Right ventricle myocardium superior (tissue), 1 donor: ENCODE measurements at regions of chr16 and their contacts with region 1.

Region 1: GRCh38 chr16:82580298-82580890 is 46.4 kb upstream of the CDH13 start:
- DNase-seq: no peak
- ATAC-seq: peak; percentile 74

Region 2: GRCh38 chr16:82368041-82368440 is 212.4 kb before region 1 on chr16:
- intact Hi-C with region 1: loop called (anchors 5 kb)
- DNase-seq: peak; percentile 75
- ATAC-seq: peak; percentile 94

Region 3: DNA sequence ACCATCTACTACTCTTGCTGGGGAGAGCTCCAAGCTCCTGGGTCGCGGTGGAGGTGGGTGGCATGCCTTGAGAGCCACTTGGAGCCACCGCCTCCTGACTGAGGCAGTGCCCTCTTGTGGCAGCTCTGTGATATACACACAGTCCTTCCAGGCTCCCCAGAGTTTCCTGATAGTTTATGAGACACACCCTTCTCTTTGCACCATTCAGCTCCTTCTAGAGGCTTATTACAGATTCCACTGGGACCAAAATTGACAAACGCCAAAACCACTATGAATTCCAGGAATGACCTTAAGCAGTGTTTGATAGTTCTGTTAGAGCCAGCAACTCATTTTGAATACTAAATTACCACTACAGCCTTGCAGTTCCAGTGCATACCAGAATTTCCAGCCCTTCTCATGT is 123.7 kb before region 1 on chr16:
- intact Hi-C with region 1: loop called (anchors 10 kb)
- DNase-seq: peak; percentile 58
- ATAC-seq: peak; percentile 90

Region 4: DNA sequence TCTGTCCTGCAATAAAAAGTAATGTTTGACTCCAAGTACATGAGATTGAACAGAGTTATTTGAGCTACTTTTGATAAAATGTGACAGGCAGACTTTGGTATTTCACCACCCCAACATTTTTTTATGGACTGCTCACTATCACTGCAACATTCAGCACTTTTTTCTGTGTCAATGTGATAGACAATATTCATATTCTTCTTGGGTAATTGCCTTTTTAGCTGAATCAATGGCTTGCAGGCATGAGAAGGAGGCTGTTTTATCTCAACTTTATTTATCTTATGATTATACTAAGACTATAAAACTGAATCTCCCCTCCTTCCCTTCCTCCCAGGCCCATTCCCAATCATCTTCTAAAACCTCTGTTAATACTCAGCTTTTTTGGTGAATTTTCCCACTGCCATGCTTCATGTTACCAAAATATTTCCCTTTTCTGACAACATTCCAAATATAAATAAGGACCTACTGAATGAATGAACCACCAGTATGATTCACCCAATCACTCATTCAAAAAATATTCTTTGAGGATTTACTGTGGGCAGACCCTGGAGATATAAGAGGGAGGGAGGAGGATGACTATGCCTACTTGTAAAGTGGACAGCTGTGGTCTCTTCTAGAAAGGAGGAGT is 114.0 kb after region 1 on chr16:
- intact Hi-C with region 1: no loop called
- DNase-seq: no peak
- ATAC-seq: no peak

Region 5: GRCh38 chr16:82796047-82796446 is 215.7 kb after region 1 on chr16:
- intact Hi-C with region 1: no loop called
- DNase-seq: no peak
- ATAC-seq: no peak